Sigmoid colon (tissue), 7 donors: ENCODE measurements at regions of chr17 and their contacts with region 1.

Region 1: DNA sequence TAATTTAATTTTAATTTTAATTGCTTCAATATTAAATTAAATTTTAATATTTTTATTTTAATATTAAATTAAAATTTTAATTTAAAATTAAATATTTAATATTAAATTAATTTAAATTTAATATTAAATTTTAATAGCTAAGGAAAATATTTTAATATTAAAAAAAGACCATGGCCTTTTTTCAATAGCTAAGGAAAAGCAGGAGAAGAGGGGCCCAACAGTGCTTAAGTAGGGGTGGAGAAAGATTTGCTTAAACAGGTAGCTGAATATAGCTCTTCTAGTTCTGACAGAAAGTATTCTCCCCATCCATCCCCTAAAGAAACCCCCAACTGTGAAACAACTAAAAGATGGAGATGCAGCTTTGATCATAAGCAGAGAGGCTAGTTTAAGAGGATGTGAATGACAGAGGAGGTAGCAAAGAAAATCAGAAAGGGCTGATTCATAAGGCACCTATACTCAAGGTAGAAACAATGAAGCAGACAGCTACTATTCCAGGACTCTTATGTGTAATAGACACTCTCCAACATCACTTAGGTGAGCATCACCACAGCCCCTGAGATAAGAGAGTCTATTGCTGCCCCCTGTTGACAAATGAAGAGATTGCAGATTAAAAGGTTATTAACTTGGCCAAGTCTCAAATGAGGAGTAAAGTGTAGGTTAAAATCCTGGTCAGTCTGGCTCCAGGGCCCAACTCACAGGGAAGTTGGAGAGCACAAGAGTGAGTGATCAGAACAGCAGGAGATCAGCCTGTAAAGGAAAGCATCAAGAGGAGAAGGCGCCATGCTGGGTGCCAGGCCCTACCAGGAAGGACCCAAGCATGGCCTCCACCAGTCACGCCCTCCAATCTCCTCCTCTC is 7.8 kb upstream of the RNASEK start:
- DNase-seq: no peak
- H3K4me3 ChIP-seq: no peak overlapping the region
- H3K27ac ChIP-seq: no peak overlapping the region
- H3K4me1 ChIP-seq: peaks cover 0 to 3% (median 1%) of the 10 kb centered on the region in 4 donors
- H3K27me3 ChIP-seq: no peaks in the 10 kb centered on the region
- CTCF ChIP-seq: peak; percentile 15 to 66 (median 64)
- EP300 ChIP-seq: no peak
- POLR2A ChIP-seq: no peak

Region 2: DNA sequence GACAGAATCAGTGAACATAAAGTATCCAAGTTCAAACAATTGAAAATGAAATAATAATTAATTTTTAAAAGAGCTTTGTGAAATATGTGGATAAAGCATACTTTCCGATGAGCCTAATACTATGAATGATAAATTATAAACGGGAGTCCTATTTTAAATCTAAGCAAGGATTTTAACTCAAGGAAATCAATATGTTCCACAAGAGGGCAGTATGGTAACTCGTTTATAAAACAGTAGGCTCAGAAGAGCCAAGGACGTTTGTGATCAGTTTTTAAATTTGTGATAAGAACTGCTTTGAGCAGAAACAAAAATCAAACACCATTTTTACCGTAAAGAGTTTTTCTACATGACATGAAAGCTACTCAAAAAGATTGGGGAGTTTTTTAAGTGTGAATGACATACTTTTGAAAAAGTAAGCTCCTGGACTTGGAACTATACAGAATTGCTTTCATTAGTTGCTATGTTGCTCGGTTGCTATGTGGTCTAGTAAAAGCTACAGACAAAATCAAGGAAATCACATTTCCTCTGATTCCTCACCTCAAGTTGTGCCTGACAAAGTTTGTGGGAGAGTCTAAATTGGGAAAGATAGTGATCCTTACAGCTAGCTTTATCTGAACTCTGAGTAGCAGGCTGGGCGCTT is 161.3 kb before region 1 on chr17:
- intact Hi-C with region 1: loop called (anchors 10 kb)
- DNase-seq: no peak
- H3K4me3 ChIP-seq: no peak overlapping the region
- H3K27ac ChIP-seq: no peak overlapping the region
- H3K4me1 ChIP-seq: no peaks in the 10 kb centered on the region
- H3K27me3 ChIP-seq: peaks cover 0 to 28% (median 7%) of the 10 kb centered on the region in 3 donors
- CTCF ChIP-seq: peak in 2 of 4 experiments; percentile 22 to 53
- EP300 ChIP-seq: no peak
- POLR2A ChIP-seq: no peak

Region 3: DNA sequence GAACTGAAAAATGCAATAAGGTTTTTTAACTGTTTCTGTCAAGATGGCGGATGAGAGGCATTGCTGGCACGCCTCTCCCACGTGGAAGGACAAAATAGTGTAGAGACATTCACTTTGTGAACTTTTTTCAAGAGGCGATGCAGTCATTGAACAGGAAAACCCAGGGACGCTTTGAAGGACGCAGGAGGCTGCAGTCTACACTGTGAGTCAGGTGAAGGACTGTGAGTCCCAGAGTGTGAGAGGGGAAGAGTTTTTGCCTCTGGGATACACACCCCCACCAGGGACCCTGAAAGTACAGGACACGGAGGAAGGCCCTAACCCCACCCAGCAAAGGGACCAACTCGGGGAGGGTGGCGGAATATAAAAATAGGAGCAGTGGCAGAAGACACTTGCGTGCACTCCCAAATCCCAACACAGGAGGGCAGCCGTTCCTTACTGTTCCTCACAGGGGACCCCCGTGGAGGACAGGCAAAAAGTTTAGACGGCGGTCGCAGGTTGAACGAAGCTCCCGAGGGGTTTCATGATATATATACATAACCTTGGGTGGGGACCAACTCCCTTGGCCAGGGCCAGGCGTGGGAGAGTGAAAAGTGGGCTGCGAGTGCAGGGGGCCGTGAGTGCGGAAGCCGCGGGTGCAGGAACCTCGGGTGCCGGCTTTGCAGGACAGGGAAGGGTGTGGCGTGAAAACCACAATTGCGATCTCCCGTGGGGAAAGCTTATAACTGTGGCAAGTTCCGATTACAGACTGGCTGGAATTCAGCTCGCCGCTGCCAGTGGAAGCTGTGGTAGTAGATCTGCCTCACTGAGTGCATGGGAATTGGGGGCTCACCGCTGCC is 90.8 kb before region 1 on chr17:
- intact Hi-C with region 1: loop called (anchors 2 kb)
- DNase-seq: peak; percentile 79
- H3K4me3 ChIP-seq: peak overlapping the region in 2 of 4 donors; percentile 6 to 23
- H3K27ac ChIP-seq: no peak overlapping the region
- H3K4me1 ChIP-seq: peaks cover 0 to 10% (median 3%) of the 10 kb centered on the region in 4 donors
- H3K27me3 ChIP-seq: peaks cover 0 to 34% (median 6%) of the 10 kb centered on the region in 3 donors
- CTCF ChIP-seq: peak; percentile 58 to 80 (median 68)
- EP300 ChIP-seq: no peak
- POLR2A ChIP-seq: no peak

Region 4: DNA sequence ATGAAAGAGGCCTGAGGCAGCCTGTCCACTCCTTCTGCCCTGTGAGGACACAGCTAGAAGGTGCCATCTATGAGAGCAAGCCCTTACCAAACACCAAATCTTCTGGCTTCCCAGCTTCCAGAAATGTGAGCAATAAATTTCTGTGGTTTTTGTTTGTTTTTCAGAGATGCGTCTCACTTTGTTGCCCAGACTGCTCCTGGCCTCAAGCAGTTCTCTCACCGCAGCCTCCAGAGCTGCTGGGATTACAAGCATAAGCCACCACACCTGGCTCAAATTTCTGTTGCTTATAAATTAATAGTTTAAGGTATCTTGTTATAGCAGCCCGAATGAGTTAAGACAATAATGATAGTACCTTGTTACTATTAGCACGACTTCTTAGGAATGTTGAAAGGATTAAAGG is 51.8 kb after region 1 on chr17:
- intact Hi-C with region 1: no loop called
- DNase-seq: no peak
- H3K4me3 ChIP-seq: no peak overlapping the region
- H3K27ac ChIP-seq: no peak overlapping the region
- H3K4me1 ChIP-seq: no peaks in the 10 kb centered on the region
- H3K27me3 ChIP-seq: peaks cover 0 to 3% (median 0%) of the 10 kb centered on the region in 3 donors
- CTCF ChIP-seq: no peak
- EP300 ChIP-seq: no peak
- POLR2A ChIP-seq: no peak

Region 5: DNA sequence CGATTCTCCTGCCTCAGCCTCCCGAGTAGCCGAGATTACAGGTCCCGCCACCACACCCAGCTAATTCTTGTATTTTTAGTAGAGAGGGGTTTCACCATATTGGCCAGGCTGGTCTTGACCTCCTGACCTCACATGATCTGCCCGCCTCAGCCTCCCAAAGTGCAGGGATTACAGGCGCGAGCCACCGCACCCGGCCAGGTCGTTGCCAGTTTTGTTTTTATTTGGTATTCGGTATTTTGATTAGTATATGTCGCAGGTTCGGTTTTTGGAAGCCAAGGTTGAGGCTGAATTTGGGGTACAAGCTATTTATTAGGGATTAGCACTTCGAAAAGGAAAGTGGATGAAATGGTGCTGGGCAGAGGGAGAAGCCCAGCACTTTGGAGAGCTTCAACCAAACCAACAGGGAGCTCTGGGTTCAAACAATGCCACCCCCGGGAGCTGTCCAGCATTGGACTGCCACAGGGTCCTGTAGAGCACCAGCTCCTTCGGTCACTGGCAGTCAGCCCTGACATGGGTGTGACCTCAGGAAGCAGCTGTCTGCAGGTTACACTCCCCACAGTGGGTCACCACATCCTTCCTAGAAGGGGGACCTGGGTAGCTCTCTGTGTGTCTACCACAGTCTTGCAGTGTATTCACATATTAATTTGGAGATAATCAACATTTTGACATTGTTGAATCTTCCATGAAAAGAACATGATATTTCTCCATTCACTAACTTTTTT is 76.9 kb after region 1 on chr17:
- intact Hi-C with region 1: no loop called
- DNase-seq: no peak
- H3K4me3 ChIP-seq: no peak overlapping the region
- H3K27ac ChIP-seq: no peak overlapping the region
- H3K4me1 ChIP-seq: no peaks in the 10 kb centered on the region
- H3K27me3 ChIP-seq: peaks cover 0 to 4% (median 0%) of the 10 kb centered on the region in 3 donors
- CTCF ChIP-seq: no peak
- EP300 ChIP-seq: no peak
- POLR2A ChIP-seq: no peak